Activated CD4-positive, alpha-beta T cell treated with anti-CD3 and anti-CD28 coated beads, Interleukin-2, amount 10 ng/mL, durations not matched to agents 24 days and 14 days (primary cell): ENCODE measurements at regions of chr18 and their contacts with region 1.

Region 1: GRCh38 chr18:27363872-27364271 is 178.8 kb upstream of the CHST9 start:
- DNase-seq: no peak
- H3K4me3 Mint-ChIP-seq: no peak overlapping the region
- H3K27ac Mint-ChIP-seq: no peak overlapping the region
- H3K4me1 Mint-ChIP-seq: no peaks in the 10 kb centered on the region
- H3K27me3 Mint-ChIP-seq: peaks cover 3% of the 10 kb centered on the region

Region 2: GRCh38 chr18:27461957-27462356 is 98.1 kb after region 1 on chr18:
- intact Hi-C with region 1: loop called (anchors 10 kb)
- DNase-seq: no peak
- H3K4me3 Mint-ChIP-seq: no peak overlapping the region
- H3K27ac Mint-ChIP-seq: no peak overlapping the region
- H3K4me1 Mint-ChIP-seq: no peaks in the 10 kb centered on the region
- H3K27me3 Mint-ChIP-seq: no peaks in the 10 kb centered on the region

Region 3: GRCh38 chr18:27599202-27599829 is 235.4 kb after region 1 on chr18:
- intact Hi-C with region 1: loop called (anchors 1 kb)
- DNase-seq: peak; percentile 79
- H3K4me3 Mint-ChIP-seq: no peak overlapping the region
- H3K27ac Mint-ChIP-seq: no peak overlapping the region
- H3K4me1 Mint-ChIP-seq: no peaks in the 10 kb centered on the region
- H3K27me3 Mint-ChIP-seq: no peaks in the 10 kb centered on the region

Region 4: GRCh38 chr18:27661320-27662018 is 297.6 kb after region 1 on chr18:
- intact Hi-C with region 1: no loop called
- DNase-seq: no peak
- H3K4me3 Mint-ChIP-seq: no peak overlapping the region
- H3K27ac Mint-ChIP-seq: no peak overlapping the region
- H3K4me1 Mint-ChIP-seq: no peaks in the 10 kb centered on the region
- H3K27me3 Mint-ChIP-seq: no peaks in the 10 kb centered on the region